CD8-positive, alpha-beta T cell (primary cell): ENCODE measurements at regions of chr15 and their contacts with region 1.

Region 1: DNA sequence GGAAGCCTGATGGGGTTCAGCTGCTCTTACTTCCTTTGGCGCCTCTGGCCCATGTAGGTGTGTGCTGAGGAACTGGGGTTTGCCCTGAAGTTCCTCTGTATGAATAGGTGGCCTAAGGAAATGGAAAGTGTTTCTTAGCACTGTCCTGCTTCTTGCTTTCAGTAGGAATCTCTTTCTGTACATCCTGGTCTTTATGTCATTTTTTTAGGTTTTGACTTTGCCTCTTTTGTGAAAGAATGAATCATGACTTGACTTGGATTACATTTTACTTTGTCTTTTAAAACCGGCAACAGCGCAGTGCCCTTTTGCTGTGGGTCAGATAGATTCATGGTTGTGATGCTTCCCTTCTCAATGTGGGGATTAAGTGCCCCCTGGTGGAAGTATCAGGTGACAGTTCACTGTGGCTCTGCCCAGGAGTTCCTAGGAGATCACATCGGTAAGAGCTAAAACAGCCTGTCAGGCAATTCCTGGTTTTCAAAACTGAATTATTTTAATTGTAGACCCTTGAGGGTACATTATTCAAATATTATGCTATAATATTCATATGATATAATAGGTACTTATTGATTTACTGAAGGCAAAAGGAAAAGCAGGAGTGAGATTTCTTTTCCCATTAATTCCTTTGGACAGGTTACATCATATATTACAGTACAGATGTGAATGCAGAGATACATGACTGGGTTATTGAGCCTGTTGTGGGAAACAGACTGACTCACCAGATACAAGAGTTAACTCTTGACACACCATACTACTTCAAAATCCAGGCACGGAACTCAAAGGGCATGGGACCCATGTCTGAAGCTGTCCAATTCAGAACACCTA is 95.4 kb downstream of the HCN4 start:
- DNase-seq: peak; percentile 2 to 61 (median 35)
- ATAC-seq: peak; percentile 36
- H3K4me3 ChIP-seq: no peak overlapping the region
- H3K4me3 Mint-ChIP-seq: no peak overlapping the region
- H3K27ac ChIP-seq: no peak overlapping the region
- H3K27ac Mint-ChIP-seq: no peak overlapping the region
- H3K4me1 ChIP-seq: no peaks in the 10 kb centered on the region
- H3K4me1 Mint-ChIP-seq: peaks cover 4% of the 10 kb centered on the region
- H3K27me3 ChIP-seq: no peaks in the 10 kb centered on the region
- H3K27me3 Mint-ChIP-seq: peaks cover 2% of the 10 kb centered on the region
- CTCF ChIP-seq: peak; percentile 65

Region 2: GRCh38 chr15:72339777-72340177 is 933.6 kb before region 1 on chr15:
- CTCF ChIA-PET with region 1: no interaction called
- POLR2A ChIA-PET with region 1: no interaction called
- intact Hi-C with region 1: loop called in 1 of 2 experiments (anchors 5 kb)
- DNase-seq: no peak
- ATAC-seq: no peak
- H3K4me3 ChIP-seq: no peak overlapping the region
- H3K4me3 Mint-ChIP-seq: no peak overlapping the region
- H3K27ac ChIP-seq: no peak overlapping the region
- H3K27ac Mint-ChIP-seq: no peak overlapping the region
- H3K4me1 ChIP-seq: no peaks in the 10 kb centered on the region
- H3K4me1 Mint-ChIP-seq: no peaks in the 10 kb centered on the region
- H3K27me3 ChIP-seq: no peaks in the 10 kb centered on the region
- H3K27me3 Mint-ChIP-seq: no peaks in the 10 kb centered on the region
- CTCF ChIP-seq: no peak

Region 3: GRCh38 chr15:72599855-72600464 is 673.4 kb before region 1 on chr15:
- CTCF ChIA-PET with region 1: interaction called, 4 read pairs
- POLR2A ChIA-PET with region 1: no interaction called
- intact Hi-C with region 1: loop called in 1 of 2 experiments (anchors 5 kb)
- DNase-seq: peak in 4 of 9 experiments; percentile 5 to 56 (median 38)
- ATAC-seq: peak; percentile 34
- H3K4me3 ChIP-seq: no peak overlapping the region
- H3K4me3 Mint-ChIP-seq: no peak overlapping the region
- H3K27ac ChIP-seq: no peak overlapping the region
- H3K27ac Mint-ChIP-seq: no peak overlapping the region
- H3K4me1 ChIP-seq: no peaks in the 10 kb centered on the region
- H3K4me1 Mint-ChIP-seq: no peaks in the 10 kb centered on the region
- H3K27me3 ChIP-seq: no peaks in the 10 kb centered on the region
- H3K27me3 Mint-ChIP-seq: no peaks in the 10 kb centered on the region
- CTCF ChIP-seq: peak; percentile 73

Region 4: DNA sequence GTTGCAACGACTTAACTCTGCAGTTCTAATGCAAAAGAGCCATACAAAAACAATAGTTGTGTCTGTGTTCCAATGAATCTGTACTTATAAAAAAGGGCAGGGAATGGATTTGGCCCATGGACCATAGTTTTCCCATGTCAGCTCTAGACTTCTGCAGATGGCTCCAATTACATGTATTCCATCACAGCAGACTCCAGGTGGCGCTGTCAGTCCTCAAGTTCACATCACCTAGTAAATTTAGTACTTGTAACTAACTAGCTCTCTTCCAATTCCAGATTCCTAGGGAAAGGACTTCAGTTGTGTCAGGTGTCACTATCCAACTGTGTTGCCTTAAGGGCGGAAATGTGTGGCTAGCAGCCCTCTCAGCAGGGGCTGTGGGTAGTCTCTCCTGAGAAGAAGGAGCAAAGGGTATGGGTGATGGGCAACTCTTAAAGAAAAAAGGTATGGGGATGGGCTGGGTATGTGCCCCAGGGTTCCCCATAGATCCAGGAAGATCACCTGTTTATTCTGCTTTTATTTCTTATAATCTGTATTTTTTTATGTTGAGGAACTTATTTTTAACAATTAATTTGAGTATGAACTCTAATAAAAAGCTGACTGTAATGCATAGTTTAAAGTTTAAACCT is 551.2 kb before region 1 on chr15:
- CTCF ChIA-PET with region 1: interaction called, 4 read pairs
- POLR2A ChIA-PET with region 1: no interaction called
- intact Hi-C with region 1: loop called (anchors 1 to 10 kb)
- DNase-seq: peak; percentile 37 to 76 (median 71)
- ATAC-seq: no peak
- H3K4me3 ChIP-seq: no peak overlapping the region
- H3K4me3 Mint-ChIP-seq: no peak overlapping the region
- H3K27ac ChIP-seq: no peak overlapping the region
- H3K27ac Mint-ChIP-seq: no peak overlapping the region
- H3K4me1 ChIP-seq: no peaks in the 10 kb centered on the region
- H3K4me1 Mint-ChIP-seq: no peaks in the 10 kb centered on the region
- H3K27me3 ChIP-seq: no peaks in the 10 kb centered on the region
- H3K27me3 Mint-ChIP-seq: no peaks in the 10 kb centered on the region
- CTCF ChIP-seq: peak; percentile 70

Region 5: GRCh38 chr15:72796515-72797337 is 476.7 kb before region 1 on chr15:
- CTCF ChIA-PET with region 1: no interaction called
- POLR2A ChIA-PET with region 1: no interaction called
- intact Hi-C with region 1: loop called in 1 of 2 experiments (anchors 5 kb)
- DNase-seq: peak in 8 of 9 experiments; percentile 19 to 73 (median 43)
- ATAC-seq: peak; percentile 82
- H3K4me3 ChIP-seq: peak overlapping the region; percentile 57 to 63
- H3K4me3 Mint-ChIP-seq: peak overlapping the region; percentile 83
- H3K27ac ChIP-seq: no peak overlapping the region
- H3K27ac Mint-ChIP-seq: no peak overlapping the region
- H3K4me1 ChIP-seq: peaks cover 9% of the 10 kb centered on the region
- H3K4me1 Mint-ChIP-seq: peaks cover 10% of the 10 kb centered on the region
- H3K27me3 ChIP-seq: peaks cover 0 to 2% of the 10 kb centered on the region in 2 experiments
- H3K27me3 Mint-ChIP-seq: peaks cover 45% of the 10 kb centered on the region
- CTCF ChIP-seq: peak; percentile 57

Region 6: DNA sequence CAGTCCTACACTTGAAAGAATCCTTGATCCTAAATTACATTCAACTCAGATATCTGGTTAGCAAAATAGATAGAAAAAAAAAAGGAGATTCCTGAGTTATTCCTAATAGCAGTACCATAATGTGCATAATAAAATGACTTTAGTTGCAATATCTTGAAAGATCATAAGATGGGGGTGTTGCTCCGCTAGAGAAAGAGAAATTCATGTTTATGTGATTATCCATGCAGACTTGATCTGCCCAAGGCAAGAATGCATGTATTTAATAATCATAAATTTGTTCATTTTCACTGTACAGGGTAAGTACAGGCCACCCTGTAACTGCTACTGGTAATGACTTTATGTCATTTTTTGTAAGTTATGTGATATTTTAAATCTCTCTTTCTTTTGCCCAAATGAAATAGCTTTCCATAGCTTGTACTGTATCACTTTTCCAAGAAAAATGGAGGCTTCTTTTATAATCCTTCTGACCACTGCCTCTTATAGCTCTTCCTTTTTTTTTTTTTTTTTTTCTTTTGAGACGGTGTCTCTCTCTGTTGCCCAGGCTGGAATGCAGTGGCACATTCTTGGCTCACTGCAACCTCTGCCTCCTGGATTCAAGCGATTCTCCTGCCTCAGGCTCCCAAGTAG is 10.8 kb after region 1 on chr15:
- CTCF ChIA-PET with region 1: interaction called, 16 read pairs
- POLR2A ChIA-PET with region 1: no interaction called
- intact Hi-C with region 1: no loop called
- DNase-seq: peak in 2 of 9 experiments; percentile 8 to 18
- ATAC-seq: no peak
- H3K4me3 ChIP-seq: no peak overlapping the region
- H3K4me3 Mint-ChIP-seq: no peak overlapping the region
- H3K27ac ChIP-seq: no peak overlapping the region
- H3K27ac Mint-ChIP-seq: no peak overlapping the region
- H3K4me1 ChIP-seq: no peaks in the 10 kb centered on the region
- H3K4me1 Mint-ChIP-seq: no peaks in the 10 kb centered on the region
- H3K27me3 ChIP-seq: no peaks in the 10 kb centered on the region
- H3K27me3 Mint-ChIP-seq: peaks cover 6% of the 10 kb centered on the region
- CTCF ChIP-seq: no peak